ENCODE measurements at regions of chr2 and their contacts with region 1.

Region 1: DNA sequence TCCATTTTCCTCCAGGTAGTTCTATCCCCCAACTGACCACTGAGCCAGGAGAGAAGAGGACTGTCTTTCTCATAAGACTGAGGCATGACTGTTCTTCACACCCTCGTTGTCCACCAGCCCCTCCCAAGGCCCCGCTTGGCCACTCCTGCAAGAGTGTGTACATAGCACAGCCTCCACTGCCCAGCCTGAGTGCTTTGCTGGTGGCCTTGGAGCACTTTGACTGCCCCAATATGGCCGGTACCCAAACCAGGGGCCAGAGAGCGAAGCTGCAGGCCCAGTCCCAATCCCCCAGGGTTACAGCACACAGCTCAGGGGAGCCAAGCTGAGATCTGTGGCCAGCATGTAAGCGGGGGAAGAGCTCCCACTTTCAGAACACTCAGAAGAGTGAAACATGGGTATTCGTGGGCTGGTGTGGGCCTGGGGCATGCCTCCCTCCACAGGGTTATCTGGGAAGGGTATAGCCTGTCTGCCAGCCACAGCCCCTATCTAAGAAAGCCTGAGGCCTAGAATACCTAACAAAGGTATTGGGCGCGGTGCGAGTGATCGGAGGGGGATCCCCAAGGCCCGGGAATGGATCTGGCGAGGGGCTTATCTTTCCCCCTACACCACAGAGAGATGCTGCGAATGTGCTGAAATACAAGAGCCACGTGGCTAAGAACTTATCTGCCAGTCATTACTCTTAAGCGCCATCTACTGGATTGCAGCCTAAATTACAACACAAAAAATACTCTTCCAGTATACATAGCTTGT is 163.8 kb downstream of the WDPCP start:
- DNase-seq: no peak
- H3K4me3 ChIP-seq: no peak overlapping the region
- H3K27ac ChIP-seq: no peak overlapping the region
- H3K4me1 ChIP-seq: no peaks in the 10 kb centered on the region
- H3K27me3 ChIP-seq: no peaks in the 10 kb centered on the region
- CTCF ChIP-seq: no peak
- POLR2A ChIP-seq: no peak

Region 2: DNA sequence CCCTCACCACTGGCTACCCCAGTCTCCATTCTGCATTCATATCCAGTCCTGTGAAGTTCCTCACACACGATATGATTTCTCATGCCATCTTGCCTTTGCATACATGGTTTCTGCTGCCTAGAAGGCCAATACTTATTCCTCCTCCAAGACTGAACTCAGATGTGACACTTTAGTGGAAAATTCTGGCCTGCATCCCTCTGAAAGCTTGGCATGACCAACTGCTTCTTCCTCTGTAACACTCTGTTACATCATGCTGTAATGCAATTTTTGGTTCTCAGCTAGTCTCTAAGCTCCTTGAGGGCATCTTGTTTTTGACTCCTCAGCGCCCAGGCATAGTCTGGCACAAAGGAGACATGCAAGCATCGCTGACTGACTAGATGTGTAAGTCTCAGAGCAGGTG is 1583.2 kb before region 1 on chr2:
- intact Hi-C with region 1: no loop called
- DNase-seq: no peak
- H3K4me3 ChIP-seq: no peak overlapping the region
- H3K27ac ChIP-seq: no peak overlapping the region
- H3K4me1 ChIP-seq: no peaks in the 10 kb centered on the region
- H3K27me3 ChIP-seq: no peaks in the 10 kb centered on the region
- CTCF ChIP-seq: no peak
- POLR2A ChIP-seq: no peak

Region 3: DNA sequence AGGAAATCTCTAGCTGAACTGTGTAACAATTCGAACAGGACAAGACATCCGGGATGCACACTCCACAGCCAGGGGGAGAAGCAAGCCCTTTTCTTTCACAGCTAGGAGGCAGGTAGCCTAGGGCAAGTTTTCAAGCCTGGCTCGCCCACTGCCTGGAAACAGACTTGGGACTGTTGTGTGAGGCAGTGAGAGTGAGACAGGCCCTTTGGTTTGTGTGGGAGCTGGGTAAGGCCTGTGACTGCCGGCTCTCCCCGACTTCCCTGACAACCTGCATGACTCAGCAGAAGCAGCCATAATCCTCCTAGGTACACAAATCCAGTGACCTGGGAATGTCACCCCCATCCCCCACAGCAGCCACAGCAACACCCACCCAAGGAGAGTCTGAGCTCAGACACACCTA is 16.0 kb before region 1 on chr2:
- intact Hi-C with region 1: no loop called
- DNase-seq: no peak
- H3K4me3 ChIP-seq: no peak overlapping the region
- H3K27ac ChIP-seq: no peak overlapping the region
- H3K4me1 ChIP-seq: no peaks in the 10 kb centered on the region
- H3K27me3 ChIP-seq: no peaks in the 10 kb centered on the region
- CTCF ChIP-seq: no peak
- POLR2A ChIP-seq: no peak

Region 4: GRCh38 chr2:63446658-63447057 is 22.2 kb after region 1 on chr2:
- intact Hi-C with region 1: loop called (anchors 2 kb)
- DNase-seq: no peak
- H3K4me3 ChIP-seq: no peak overlapping the region
- H3K27ac ChIP-seq: no peak overlapping the region
- H3K4me1 ChIP-seq: no peaks in the 10 kb centered on the region
- H3K27me3 ChIP-seq: no peaks in the 10 kb centered on the region
- CTCF ChIP-seq: no peak
- POLR2A ChIP-seq: no peak

Region 5: GRCh38 chr2:64263309-64263708 is 838.8 kb after region 1 on chr2:
- intact Hi-C with region 1: no loop called
- DNase-seq: peak in 1 of 2 donors; percentile 45
- H3K4me3 ChIP-seq: no peak overlapping the region
- H3K27ac ChIP-seq: peak overlapping the region; percentile 70 to 75
- H3K4me1 ChIP-seq: peaks cover 4 to 15% of the 10 kb centered on the region in 2 donors
- H3K27me3 ChIP-seq: no peaks in the 10 kb centered on the region
- CTCF ChIP-seq: no peak
- POLR2A ChIP-seq: no peak